A673 (cell line): ENCODE measurements at regions of chr19 and their contacts with region 1.

Region 1: GRCh38 chr19:12639901-12640613 is 26.5 kb downstream of the MAN2B1 start:
- DNase-seq: peak; percentile 87
- H3K4me3 ChIP-seq: no peak overlapping the region
- H3K27ac ChIP-seq: no peak overlapping the region
- H3K4me1 ChIP-seq: no peaks in the 10 kb centered on the region
- H3K27me3 ChIP-seq: no peaks in the 10 kb centered on the region
- CTCF ChIP-seq: peak; percentile 93

Region 2: GRCh38 chr19:11881151-11881800 is 758.8 kb before region 1 on chr19:
- CTCF ChIA-PET with region 1: interaction called, 10 read pairs
- POLR2A ChIA-PET with region 1: no interaction called
- intact Hi-C with region 1: loop called (anchors 10 kb)
- DNase-seq: peak; percentile 76
- H3K4me3 ChIP-seq: no peak overlapping the region
- H3K27ac ChIP-seq: no peak overlapping the region
- H3K4me1 ChIP-seq: no peaks in the 10 kb centered on the region
- H3K27me3 ChIP-seq: peaks cover 4% of the 10 kb centered on the region
- CTCF ChIP-seq: peak; percentile 79

Region 3: GRCh38 chr19:11887611-11888531 is 752.2 kb before region 1 on chr19 and contains the start of gene ZNF69:
- CTCF ChIA-PET with region 1: no interaction called
- POLR2A ChIA-PET with region 1: no interaction called
- intact Hi-C with region 1: loop called (anchors 10 kb)
- DNase-seq: peak; percentile 76
- H3K4me3 ChIP-seq: peak within 1 kb of the TSS; percentile 56
- H3K27ac ChIP-seq: peak within 1 kb of the TSS; percentile 27
- H3K4me1 ChIP-seq: no peaks in the 10 kb centered on the region
- H3K27me3 ChIP-seq: peaks cover 4% of the 10 kb centered on the region
- CTCF ChIP-seq: peak; percentile 42; the same call in 1 of the 2 replicates
- total RNA-seq, gene ZNF69: 4.3 and 5.5 TPM in 2 replicates

Region 4: DNA sequence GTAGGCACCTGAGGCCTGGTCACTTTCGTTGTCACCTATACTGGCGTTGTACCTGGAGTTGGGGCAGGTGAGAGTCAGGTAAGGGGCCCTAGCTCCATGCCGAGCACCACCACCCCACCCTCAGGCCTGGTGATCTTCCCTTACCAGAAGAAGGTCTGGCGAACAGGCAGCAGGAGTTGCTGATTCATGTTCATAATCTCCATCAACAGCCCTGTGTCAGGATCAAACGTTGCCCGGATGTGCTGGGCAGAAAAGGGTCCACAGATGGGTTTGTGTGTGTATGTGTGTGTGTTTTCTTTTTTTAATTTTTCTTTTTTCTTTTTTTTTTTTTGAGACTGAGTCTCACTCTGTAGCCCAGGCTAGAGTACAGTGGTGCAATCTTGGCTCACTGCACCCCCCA is 12.2 kb after region 1 on chr19:
- CTCF ChIA-PET with region 1: no interaction called
- POLR2A ChIA-PET with region 1: no interaction called
- intact Hi-C with region 1: no loop called
- DNase-seq: no peak
- H3K4me3 ChIP-seq: no peak overlapping the region
- H3K27ac ChIP-seq: no peak overlapping the region
- H3K4me1 ChIP-seq: no peaks in the 10 kb centered on the region
- H3K27me3 ChIP-seq: no peaks in the 10 kb centered on the region
- CTCF ChIP-seq: no peak

Region 5: GRCh38 chr19:12766051-12766521 is 126.0 kb after region 1 on chr19:
- CTCF ChIA-PET with region 1: no interaction called
- POLR2A ChIA-PET with region 1: no interaction called
- intact Hi-C with region 1: no loop called
- DNase-seq: peak; percentile 89
- H3K4me3 ChIP-seq: peak overlapping the region; percentile 57
- H3K27ac ChIP-seq: no peak overlapping the region
- H3K4me1 ChIP-seq: no peaks in the 10 kb centered on the region
- H3K27me3 ChIP-seq: no peaks in the 10 kb centered on the region
- CTCF ChIP-seq: peak; percentile 97

Region 6: GRCh38 chr19:12821761-12822160 is 181.7 kb after region 1 on chr19:
- CTCF ChIA-PET with region 1: no interaction called
- POLR2A ChIA-PET with region 1: interaction called, 11 read pairs
- intact Hi-C with region 1: no loop called
- DNase-seq: no peak
- H3K4me3 ChIP-seq: no peak overlapping the region
- H3K27ac ChIP-seq: no peak overlapping the region
- H3K4me1 ChIP-seq: no peaks in the 10 kb centered on the region
- H3K27me3 ChIP-seq: no peaks in the 10 kb centered on the region
- CTCF ChIP-seq: no peak

Region 7: DNA sequence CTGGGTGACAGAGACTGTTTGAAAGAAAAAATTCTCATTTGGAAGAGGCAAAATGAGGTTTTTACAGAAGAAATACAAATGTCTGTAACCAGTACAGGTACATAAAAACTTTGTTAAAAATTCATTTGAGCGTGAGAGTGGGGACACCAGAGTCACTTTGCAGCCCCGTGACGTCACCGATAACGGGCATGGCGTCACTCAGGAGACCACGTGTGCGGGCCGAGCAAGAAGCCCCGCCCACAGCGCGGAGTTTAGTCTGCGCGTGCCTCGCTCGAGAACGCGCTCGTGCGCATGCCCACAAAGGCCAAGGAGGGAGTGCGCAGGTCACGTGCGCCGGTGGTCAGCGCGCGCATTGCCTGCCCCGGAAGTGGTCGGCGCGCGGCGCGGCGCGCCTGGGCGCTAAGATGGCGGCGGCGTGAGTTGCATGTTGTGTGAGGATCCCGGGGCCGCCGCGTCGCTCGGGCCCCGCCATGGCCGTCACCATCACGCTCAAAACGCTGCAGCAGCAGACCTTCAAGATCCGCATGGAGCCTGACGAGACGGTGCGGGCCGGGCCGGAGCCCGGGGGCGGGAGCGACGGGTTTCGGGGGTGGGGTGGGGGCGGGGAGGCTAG is 305.5 kb after region 1 on chr19 and contains the start of gene RAD23A:
- CTCF ChIA-PET with region 1: no interaction called
- POLR2A ChIA-PET with region 1: no interaction called
- intact Hi-C with region 1: no loop called
- DNase-seq: peak; percentile 99
- H3K4me3 ChIP-seq: peak within 1 kb of the TSS; percentile 98
- H3K27ac ChIP-seq: peak within 1 kb of the TSS; percentile 97
- H3K4me1 ChIP-seq: peaks cover 21% of the 10 kb centered on the region
- H3K27me3 ChIP-seq: no peaks in the 10 kb centered on the region
- CTCF ChIP-seq: no peak
- total RNA-seq, gene RAD23A: 183 and 186 TPM in 2 replicates

Region 8: DNA sequence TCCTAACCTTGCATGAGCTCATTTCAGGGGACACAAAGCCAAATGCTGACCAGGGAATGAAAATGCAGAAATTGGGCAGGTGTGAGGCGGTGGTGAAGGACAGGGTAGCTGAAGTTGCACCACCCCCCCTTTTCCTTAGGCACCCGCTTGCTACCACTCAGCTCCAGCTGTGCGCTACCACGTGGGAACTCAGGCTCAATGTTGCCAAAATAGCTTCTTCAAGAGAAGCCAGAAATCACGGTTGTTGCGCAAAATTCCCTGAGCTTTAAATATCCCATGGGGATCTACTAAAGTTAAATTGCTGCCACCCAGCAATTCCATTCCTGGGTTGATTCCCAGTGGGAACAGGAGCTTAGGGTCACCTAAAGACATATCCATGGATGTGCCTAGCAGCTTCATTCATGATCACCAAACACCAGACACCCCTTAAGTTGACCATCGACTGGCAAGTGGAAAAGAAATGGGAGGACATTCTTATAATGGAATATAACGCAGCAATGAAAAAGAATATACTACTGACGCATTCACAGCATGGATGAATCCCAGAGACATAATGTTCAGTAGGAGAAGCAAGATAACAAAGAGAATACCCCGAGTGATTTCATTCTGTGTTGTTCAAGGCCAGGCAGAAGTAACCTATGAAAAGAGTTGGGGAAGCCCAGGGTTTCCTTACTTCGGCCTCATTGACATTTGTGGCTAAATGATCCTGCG is 1578.7 kb after region 1 on chr19:
- CTCF ChIA-PET with region 1: no interaction called
- POLR2A ChIA-PET with region 1: interaction called, 19 read pairs
- intact Hi-C with region 1: no loop called
- DNase-seq: peak; percentile 28
- H3K4me3 ChIP-seq: no peak overlapping the region
- H3K27ac ChIP-seq: no peak overlapping the region
- H3K4me1 ChIP-seq: no peaks in the 10 kb centered on the region
- H3K27me3 ChIP-seq: no peaks in the 10 kb centered on the region
- CTCF ChIP-seq: no peak